H1 (cell line): ENCODE measurements at regions of chr11 and their contacts with region 1.

Region 1: DNA sequence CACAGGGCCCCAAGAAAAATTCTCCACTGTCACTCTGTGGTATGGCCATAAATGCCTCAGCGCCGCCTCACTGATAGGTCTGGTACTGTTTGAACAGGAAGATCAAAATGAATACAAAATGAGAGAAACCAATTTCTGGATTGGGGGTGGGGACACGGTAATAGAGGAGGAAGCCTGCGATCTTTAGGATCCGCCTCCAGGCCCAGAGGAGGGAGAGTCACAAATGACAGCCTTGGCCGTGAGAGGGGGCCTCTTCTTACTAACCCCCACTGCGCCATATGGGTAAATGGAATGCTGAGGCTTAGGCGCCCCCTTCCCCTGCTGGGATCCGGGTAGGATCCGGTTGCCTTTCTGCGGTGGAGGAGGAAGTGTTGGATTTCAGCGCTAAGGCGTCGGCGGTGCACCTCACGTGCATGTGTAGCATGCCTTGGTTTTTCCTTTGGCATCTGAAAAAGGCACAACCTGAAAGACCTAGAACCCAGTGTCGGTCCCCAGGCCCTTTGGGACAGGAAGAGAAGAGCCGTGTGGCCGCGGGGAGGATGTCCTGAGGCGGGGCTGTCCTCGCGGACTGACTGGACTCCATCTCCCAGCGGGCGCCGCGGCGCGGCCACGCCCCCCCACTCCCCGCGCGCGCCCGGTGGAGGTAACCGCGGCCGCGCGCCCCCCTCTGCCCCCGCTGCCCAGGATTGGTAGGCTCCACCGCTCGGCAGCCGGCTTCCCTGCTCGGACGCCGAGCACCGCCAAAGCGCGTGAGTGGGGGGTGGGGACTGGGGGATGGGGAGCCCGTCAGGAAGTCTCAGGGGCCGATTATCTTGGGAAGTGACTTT is 718 bp upstream of the MADD start:
- DNase-seq: peak in 1 of 2 experiments; percentile 90
- H3K4me3 ChIP-seq: peak overlapping the region; percentile 75 to 93 (median 81)
- H3K27ac ChIP-seq: peak overlapping the region; percentile 65; the same call in 1 of the 2 replicates
- H3K4me1 ChIP-seq: peaks cover 14 to 25% (median 17%) of the 10 kb centered on the region in 4 experiments
- H3K27me3 ChIP-seq: no peaks in the 10 kb centered on the region
- CTCF ChIP-seq: no peak; a peak in 1 of 4 replicates
- EP300 ChIP-seq: peak in 1 of 2 experiments; percentile 79; a peak in 1 of 3 replicates
- POLR2A ChIP-seq: no peak; a peak in 1 of 3 replicates
- RAD21 ChIP-seq: no peak

Region 2: DNA sequence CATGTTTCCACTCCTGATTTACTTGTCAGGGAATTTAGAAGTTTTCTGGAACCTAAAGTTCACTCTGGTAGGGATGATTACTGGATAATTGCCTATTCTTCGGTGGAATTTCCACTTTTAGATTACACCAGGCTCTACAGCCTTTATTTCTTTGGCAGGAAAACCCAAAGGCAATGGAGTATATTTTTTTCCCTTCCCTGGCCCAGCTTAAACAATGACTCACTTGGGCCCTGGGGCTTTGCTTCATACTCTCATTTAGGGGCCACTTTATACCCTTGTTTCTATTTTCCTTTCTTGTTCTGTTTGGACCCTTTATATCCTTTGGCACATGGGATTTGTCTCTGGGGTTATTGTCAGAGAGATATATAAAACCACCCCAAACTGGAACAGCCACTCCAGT is 218.0 kb before region 1 on chr11:
- CTCF ChIA-PET with region 1: no interaction called
- POLR2A ChIA-PET with region 1: no interaction called
- DNase-seq: no peak
- H3K4me3 ChIP-seq: no peak overlapping the region
- H3K27ac ChIP-seq: no peak overlapping the region
- H3K4me1 ChIP-seq: no peaks in the 10 kb centered on the region
- H3K27me3 ChIP-seq: no peaks in the 10 kb centered on the region
- CTCF ChIP-seq: no peak
- EP300 ChIP-seq: no peak
- POLR2A ChIP-seq: no peak
- RAD21 ChIP-seq: no peak

Region 3: GRCh38 chr11:47204637-47204989 is 64.6 kb before region 1 on chr11:
- CTCF ChIA-PET with region 1: no interaction called
- POLR2A ChIA-PET with region 1: no interaction called
- DNase-seq: no peak
- H3K4me3 ChIP-seq: no peak overlapping the region
- H3K27ac ChIP-seq: 0 out of 2 replicates have a peak overlapping the region, but pooled peaks have one; percentile 42
- H3K4me1 ChIP-seq: peaks cover 2 to 7% (median 5%) of the 10 kb centered on the region in 4 experiments; a peak in 6 of 7 replicates
- H3K27me3 ChIP-seq: no peaks in the 10 kb centered on the region
- CTCF ChIP-seq: no peak
- EP300 ChIP-seq: no peak
- POLR2A ChIP-seq: no peak
- RAD21 ChIP-seq: no peak

Region 4: DNA sequence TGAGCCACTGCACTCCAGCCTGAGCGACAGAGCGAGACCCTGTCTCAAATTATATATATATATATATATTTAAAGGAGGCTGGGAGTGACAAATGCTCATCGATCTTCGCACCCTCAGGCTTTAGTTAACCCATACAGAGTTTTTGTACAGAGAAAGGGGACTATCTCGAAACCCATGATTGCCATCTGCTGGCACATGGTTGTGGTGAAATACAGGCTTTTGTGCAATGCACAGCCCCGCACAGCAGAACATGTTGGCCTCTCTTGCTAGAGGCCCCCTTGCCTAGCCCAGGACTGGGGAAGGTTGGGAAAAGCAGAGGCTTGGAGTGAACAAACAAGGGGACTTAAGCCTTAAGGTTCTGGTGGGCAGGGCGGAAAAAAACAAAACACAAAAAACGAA is 79.6 kb after region 1 on chr11:
- CTCF ChIA-PET with region 1: interaction called, 26 read pairs
- POLR2A ChIA-PET with region 1: interaction called, 3 read pairs
- DNase-seq: no peak
- H3K4me3 ChIP-seq: no peak overlapping the region
- H3K27ac ChIP-seq: no peak overlapping the region
- H3K4me1 ChIP-seq: peaks cover 0 to 12% (median 5%) of the 10 kb centered on the region in 4 experiments; a peak in 6 of 7 replicates
- H3K27me3 ChIP-seq: no peaks in the 10 kb centered on the region
- CTCF ChIP-seq: peak in 2 of 3 experiments; percentile 26 to 37; a peak in 3 of 4 replicates
- EP300 ChIP-seq: no peak
- POLR2A ChIP-seq: no peak
- RAD21 ChIP-seq: peak; percentile 40 to 54; a peak in 3 of 4 replicates